Activated CD4-positive, alpha-beta memory T cell treated with anti-CD3 and anti-CD28 coated beads for 36 hours (primary cell): ENCODE measurements at regions of chr19 and their contacts with region 1.

Region 1: GRCh38 chr19:52942386-52943133 is 19.3 kb upstream of the ZNF888 start:
- DNase-seq: peak; percentile 98
- H3K4me3 Mint-ChIP-seq: peak overlapping the region; percentile 81
- H3K27ac Mint-ChIP-seq: peak overlapping the region; percentile 82
- H3K4me1 Mint-ChIP-seq: peaks cover 26% of the 10 kb centered on the region
- H3K27me3 Mint-ChIP-seq: no peaks in the 10 kb centered on the region

Region 2: DNA sequence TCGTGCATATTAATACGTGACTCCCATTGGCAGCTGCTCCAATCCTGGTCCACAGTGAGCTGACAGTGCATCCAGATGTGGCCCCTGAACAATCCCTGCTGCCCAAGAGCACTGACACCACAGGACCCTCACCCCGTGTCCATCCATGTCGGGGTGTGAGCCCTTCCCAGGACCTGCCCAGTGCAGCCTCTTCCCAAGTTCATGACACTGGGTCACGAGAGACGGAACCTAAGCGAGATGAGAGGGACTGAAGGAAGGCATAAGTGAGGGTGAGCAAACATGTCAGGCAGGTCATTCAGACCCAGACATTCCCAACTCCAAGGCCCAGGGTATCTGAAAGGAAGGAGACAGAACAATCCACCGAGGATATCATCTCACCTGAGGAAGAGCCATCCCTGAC is 88.7 kb before region 1 on chr19:
- CTCF ChIA-PET with region 1: no interaction called
- POLR2A ChIA-PET with region 1: no interaction called
- intact Hi-C with region 1: no loop called
- DNase-seq: no peak
- H3K4me3 Mint-ChIP-seq: no peak overlapping the region
- H3K27ac Mint-ChIP-seq: no peak overlapping the region
- H3K4me1 Mint-ChIP-seq: peaks cover 22% of the 10 kb centered on the region
- H3K27me3 Mint-ChIP-seq: no peaks in the 10 kb centered on the region

Region 3: GRCh38 chr19:52922841-52923777 is 19.5 kb before region 1 on chr19 and contains the start of gene ZNF888:
- CTCF ChIA-PET with region 1: no interaction called
- POLR2A ChIA-PET with region 1: no interaction called
- intact Hi-C with region 1: loop called (anchors 2 kb)
- DNase-seq: peak; percentile 96
- H3K4me3 Mint-ChIP-seq: peak within 1 kb of the TSS; percentile 92
- H3K27ac Mint-ChIP-seq: peak within 1 kb of the TSS; percentile 87
- H3K4me1 Mint-ChIP-seq: peaks cover 23% of the 10 kb centered on the region
- H3K27me3 Mint-ChIP-seq: no peaks in the 10 kb centered on the region
- total RNA-seq, gene ZNF888: 5.0 to 6.3 TPM

Region 4: GRCh38 chr19:52993323-52994178 is 51.0 kb after region 1 on chr19:
- CTCF ChIA-PET with region 1: no interaction called
- POLR2A ChIA-PET with region 1: no interaction called
- intact Hi-C with region 1: loop called (anchors 5 kb)
- DNase-seq: peak; percentile 92
- H3K4me3 Mint-ChIP-seq: peak overlapping the region; percentile 81
- H3K27ac Mint-ChIP-seq: peak overlapping the region; percentile 42
- H3K4me1 Mint-ChIP-seq: peaks cover 11% of the 10 kb centered on the region
- H3K27me3 Mint-ChIP-seq: peaks cover 1% of the 10 kb centered on the region